HEK293T (cell line): ENCODE measurements at regions of chr16 and their contacts with region 1.

Region 1: GRCh38 chr16:2459647-2460390 is at the start of gene TEDC2:
- DNase-seq: peak; percentile 96

Region 2: DNA sequence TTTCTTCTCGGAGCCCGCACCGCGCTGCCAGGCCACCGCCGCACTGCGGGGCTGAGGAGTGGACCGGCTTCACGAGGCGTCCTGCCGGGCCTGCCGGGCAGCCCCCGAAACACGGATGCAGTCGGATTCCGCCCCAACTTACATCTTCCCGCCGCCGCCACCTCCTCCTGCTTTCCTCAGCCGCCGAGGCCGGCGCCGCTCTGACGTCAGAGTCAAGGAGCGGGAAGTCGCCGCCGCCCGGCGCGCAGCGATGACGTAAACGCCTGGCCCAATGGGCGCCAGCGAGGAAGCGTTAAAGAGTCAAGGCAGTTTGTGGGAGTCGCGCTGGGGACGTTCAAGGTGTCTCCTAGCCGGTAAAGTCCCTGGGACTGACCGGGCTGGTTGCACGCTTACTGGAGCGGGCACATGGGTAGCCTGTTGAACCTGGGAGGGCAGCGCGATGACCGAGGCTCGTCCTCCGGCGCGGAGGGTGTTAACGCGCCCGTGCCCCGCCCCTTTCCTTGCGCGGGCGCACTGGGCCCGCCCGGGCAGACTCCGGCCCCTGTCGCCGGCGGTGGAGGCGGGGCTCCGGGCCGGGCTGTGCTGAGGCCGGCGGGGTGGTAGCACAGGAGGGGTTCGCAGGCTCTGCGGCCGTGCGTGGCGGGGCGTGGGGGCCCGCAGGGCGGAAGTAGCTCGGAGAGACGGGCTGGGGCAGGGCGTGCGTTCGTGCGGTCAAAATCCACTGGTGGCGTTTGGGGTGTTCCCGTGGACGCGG is 191.7 kb before region 1 on chr16 and contains the start of gene RNPS1:
- CTCF ChIA-PET with region 1: no interaction called
- POLR2A ChIA-PET with region 1: interaction called, 12 read pairs
- DNase-seq: peak; percentile 97